Activated CD4-positive, alpha-beta memory T cell treated with anti-CD3 and anti-CD28 coated beads, Interleukin-2, amount 10 ng/mL, durations not matched to agents 7 days and 5 days (primary cell): ENCODE measurements at regions of chr17 and their contacts with region 1.

Region 1: DNA sequence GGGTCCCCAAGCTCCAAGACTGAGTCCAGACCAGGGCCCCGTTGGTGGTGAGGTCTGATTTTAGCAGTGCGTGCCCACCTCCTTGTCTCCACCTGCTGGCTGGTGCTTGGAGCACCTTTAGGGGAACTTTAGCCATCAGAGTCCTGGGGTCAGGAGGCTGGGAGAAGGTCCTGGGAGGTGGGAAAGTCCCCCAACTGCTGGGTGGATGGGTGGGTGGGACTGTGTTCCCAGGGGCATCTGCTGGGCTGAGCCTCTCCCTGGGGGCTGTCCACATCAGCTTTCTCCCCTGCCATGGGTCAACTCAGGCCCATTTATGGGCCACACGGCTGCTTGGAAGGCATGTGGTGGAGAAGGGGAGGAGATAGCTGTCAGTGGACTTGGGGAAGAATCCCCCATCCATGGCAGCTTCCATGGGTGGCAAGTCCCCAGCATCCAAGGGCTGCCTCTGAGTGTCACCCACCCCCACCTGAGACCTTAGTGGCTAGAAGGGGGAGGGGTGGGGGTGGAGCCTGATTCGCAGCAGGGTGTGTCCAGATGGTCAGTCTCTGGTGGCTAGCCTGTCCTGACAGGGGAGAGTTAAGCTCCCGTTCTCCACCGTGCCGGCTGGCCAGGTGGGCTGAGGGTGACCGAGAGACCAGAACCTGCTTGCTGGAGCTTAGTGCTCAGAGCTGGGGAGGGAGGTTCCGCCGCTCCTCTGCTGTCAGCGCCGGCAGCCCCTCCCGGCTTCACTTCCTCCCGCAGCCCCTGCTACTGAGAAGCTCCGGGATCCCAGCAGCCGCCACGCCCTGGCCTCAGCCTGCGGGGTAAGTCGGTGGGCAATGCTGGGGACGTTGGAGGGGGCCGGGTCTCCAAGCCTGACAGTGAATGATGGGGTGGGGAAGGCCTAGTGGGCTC is at the start of gene TRPV2:
- DNase-seq: peak; percentile 67
- H3K4me3 Mint-ChIP-seq: peak within 1 kb of the TSS; percentile 98
- H3K27ac Mint-ChIP-seq: peak within 1 kb of the TSS; percentile 100
- H3K4me1 Mint-ChIP-seq: peaks cover 54% of the 10 kb centered on the region
- H3K27me3 Mint-ChIP-seq: no peaks in the 10 kb centered on the region
- total RNA-seq, gene TRPV2: 131 to 142 TPM

Region 2: DNA sequence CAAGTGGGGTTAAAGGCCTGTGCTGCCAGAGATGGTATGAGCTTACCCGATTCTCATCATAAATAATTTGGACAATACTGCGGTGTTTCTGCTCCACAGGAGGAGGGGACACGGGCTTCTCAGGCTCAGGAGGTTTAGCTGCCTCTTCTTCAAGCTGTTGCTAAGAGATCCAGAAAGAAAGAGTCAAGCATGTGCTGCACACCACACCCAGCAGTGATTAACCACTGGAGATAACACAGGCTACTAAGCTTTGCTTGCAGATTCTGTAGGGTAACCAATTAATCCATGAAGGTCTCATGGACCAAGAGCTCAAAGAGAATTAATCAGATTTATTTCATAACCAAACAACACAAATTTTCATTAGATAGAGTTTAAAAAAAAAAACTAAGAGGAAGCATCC is 256.6 kb before region 1 on chr17:
- CTCF ChIA-PET with region 1: no interaction called
- POLR2A ChIA-PET with region 1: no interaction called
- DNase-seq: no peak
- H3K4me3 Mint-ChIP-seq: no peak overlapping the region
- H3K27ac Mint-ChIP-seq: no peak overlapping the region
- H3K4me1 Mint-ChIP-seq: peaks cover 1% of the 10 kb centered on the region
- H3K27me3 Mint-ChIP-seq: no peaks in the 10 kb centered on the region

Region 3: GRCh38 chr17:16285957-16286640 is 129.2 kb before region 1 on chr17:
- CTCF ChIA-PET with region 1: interaction called, 3 read pairs
- POLR2A ChIA-PET with region 1: interaction called, 11 read pairs
- DNase-seq: peak; percentile 89
- H3K4me3 Mint-ChIP-seq: peak overlapping the region; percentile 55
- H3K27ac Mint-ChIP-seq: peak overlapping the region; percentile 94
- H3K4me1 Mint-ChIP-seq: peaks cover 51% of the 10 kb centered on the region
- H3K27me3 Mint-ChIP-seq: no peaks in the 10 kb centered on the region

Region 4: DNA sequence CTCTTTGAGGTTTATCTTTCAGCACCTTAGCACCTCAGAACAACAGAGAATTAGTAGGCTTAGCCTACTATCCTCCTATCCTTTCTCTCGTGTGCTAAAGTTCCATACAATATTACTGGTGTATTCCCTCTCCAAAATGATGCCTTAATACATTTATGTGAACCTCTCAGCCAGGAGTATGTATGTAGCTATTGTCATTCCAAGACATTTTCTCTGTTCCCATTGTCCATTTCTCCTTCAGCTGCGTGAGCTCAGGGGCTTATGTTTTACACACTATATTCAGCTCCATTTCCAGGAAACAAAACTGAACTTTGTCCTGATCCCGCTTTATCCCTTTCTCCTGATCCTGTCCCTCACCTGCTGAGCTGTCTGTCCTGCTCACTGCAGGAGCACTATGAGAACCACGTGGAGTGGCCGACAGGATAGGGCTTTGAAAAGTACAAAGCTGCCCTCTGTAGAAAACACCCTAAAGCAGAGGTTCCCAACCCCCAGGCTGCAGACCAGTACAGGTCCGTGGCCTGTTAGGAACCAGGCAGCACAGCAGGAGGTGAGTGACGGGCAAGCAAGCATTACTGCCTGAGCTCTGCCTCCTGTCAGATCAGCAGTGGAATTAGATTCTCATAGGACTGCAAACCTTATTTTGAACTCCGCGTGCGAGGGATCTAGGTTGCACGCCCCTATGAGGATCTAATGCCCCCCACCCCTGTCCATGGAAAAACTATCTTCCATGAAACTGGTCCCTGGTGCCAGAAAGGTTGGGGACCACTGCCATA is 117.7 kb before region 1 on chr17:
- CTCF ChIA-PET with region 1: no interaction called
- POLR2A ChIA-PET with region 1: no interaction called
- DNase-seq: no peak
- H3K4me3 Mint-ChIP-seq: no peak overlapping the region
- H3K27ac Mint-ChIP-seq: no peak overlapping the region
- H3K4me1 Mint-ChIP-seq: peaks cover 10% of the 10 kb centered on the region
- H3K27me3 Mint-ChIP-seq: no peaks in the 10 kb centered on the region

Region 5: GRCh38 chr17:16353317-16354174 is 61.7 kb before region 1 on chr17 and contains the start of gene CENPV:
- CTCF ChIA-PET with region 1: interaction called, 3 read pairs
- POLR2A ChIA-PET with region 1: interaction called, 13 read pairs
- DNase-seq: peak; percentile 50
- H3K4me3 Mint-ChIP-seq: peak within 1 kb of the TSS; percentile 82
- H3K27ac Mint-ChIP-seq: no peak within 1 kb of the TSS
- H3K4me1 Mint-ChIP-seq: peaks cover 19% of the 10 kb centered on the region
- H3K27me3 Mint-ChIP-seq: peaks cover 28% of the 10 kb centered on the region
- total RNA-seq, gene CENPV: 9.4 to 12.3 TPM

Region 6: GRCh38 chr17:16380640-16381495 is 34.4 kb before region 1 on chr17 and contains the start of gene UBB:
- CTCF ChIA-PET with region 1: interaction called, 23 read pairs
- POLR2A ChIA-PET with region 1: interaction called, 79 read pairs
- DNase-seq: peak; percentile 96
- H3K4me3 Mint-ChIP-seq: peak within 1 kb of the TSS; percentile 88
- H3K27ac Mint-ChIP-seq: peak within 1 kb of the TSS; percentile 87
- H3K4me1 Mint-ChIP-seq: peaks cover 34% of the 10 kb centered on the region
- H3K27me3 Mint-ChIP-seq: peaks cover 2% of the 10 kb centered on the region
- total RNA-seq, gene UBB: 1,185 TPM

Region 7: DNA sequence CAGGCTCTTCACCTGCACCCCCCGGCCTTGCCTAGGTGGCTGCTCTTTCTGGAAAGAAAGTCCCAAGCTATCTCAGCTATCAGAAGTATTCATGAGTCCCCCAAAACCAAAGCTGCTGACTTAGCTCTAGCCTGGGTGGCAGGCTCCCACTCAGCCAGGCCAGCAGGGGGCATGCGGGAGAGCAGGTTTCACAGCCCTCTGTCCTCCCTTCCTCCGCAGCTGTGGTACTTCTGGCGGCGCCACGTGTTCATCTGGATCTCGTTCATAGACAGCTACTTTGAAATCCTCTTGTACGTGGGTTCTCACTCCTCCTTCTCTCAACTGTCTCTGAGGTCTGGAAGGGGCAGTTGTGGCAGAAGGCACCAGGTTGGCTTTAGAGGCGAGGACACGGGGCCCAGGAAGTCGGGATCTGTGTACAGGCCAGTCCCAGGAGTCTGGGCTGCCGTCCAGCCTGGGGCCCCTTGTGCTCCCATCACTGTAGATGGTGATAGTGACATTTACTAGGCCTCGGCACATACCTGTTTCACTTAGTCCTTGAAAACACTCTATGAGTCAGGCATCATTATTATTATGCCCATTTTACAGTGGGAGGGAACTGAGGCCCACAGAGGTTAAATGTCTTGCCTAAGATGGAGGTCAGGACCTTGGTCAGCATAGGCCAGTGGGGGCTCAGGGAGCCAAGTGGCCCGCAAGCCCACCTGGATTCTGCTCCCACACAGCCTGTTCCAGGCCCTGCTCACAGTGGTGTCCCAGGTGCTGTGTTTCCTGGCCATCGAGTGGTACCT is 13.0 kb after region 1 on chr17:
- CTCF ChIA-PET with region 1: interaction called, 11 read pairs
- POLR2A ChIA-PET with region 1: interaction called, 27 read pairs
- DNase-seq: no peak
- H3K4me3 Mint-ChIP-seq: no peak overlapping the region
- H3K27ac Mint-ChIP-seq: no peak overlapping the region
- H3K4me1 Mint-ChIP-seq: no peaks in the 10 kb centered on the region
- H3K27me3 Mint-ChIP-seq: no peaks in the 10 kb centered on the region

Region 8: DNA sequence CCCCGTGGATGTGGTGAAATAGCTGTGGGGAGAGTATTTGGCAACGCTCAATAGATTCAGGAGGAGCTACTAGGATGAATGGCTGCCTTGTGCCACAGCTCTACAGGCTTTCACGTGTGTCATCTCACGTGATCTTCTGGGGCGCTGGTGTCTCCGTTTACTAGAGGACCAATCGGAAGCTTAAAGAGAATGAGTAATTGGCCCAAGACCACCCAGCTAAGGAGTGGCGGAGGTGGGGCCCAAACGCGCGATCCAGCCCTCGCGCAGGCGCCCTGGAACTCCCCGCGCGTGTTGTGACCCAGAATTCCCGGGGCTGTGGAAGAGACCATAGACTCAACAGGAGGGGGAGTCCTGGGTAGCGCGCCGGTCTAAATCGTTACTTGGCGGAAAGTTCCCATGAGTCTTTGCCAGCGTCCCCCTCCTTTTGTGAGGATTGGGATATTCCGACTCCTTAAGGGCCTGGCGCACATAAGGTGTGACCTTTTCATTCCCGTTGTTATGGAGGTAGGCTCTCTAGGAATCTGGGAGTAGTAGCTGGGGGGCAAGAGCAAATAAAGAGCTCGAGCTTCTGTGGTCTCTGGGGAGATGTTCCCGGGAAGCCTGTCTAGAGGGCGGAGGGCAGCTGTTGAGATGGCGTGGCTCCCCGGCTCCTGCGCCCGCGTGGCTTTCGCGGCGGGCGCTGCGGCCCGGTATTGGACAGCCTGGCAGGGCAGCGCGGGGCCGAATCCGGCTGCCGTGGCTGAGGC is 23.5 kb after region 1 on chr17:
- CTCF ChIA-PET with region 1: interaction called, 30 read pairs
- POLR2A ChIA-PET with region 1: interaction called, 137 read pairs
- DNase-seq: peak; percentile 95
- H3K4me3 Mint-ChIP-seq: peak overlapping the region; percentile 98
- H3K27ac Mint-ChIP-seq: peak overlapping the region; percentile 97
- H3K4me1 Mint-ChIP-seq: peaks cover 47% of the 10 kb centered on the region
- H3K27me3 Mint-ChIP-seq: no peaks in the 10 kb centered on the region